Cardiac septum (tissue), 1 donor: ENCODE measurements at regions of chr12 and their contacts with region 1.

Region 1: DNA sequence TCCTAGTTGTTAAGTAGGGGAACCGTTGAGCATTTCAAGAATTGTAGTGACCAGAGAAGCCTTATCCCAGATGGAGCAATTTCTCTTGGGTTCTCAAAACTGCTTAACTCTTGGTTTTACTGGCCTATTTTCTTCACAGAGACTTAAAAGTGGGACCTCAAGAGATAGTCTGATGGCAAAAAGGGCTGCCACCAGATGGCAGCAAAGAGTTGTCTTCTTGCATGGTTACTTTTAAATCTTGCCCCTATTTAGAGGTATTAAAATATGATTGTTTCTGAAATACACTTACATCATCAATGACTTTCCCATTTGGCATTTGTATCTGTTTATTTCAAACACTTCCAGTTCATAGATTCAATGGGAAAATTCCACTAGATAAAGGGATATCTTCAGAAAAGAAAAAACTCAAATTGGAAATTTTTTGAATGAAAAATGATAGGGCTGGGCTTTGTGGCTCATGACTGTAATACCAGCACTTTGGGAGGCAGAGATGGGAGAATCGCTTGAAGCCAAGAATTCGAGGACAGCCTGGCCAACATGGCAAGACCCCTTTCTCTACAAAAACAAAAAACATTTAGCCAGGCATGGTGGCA is 69.9 kb upstream of the CNTN1 start:
- DNase-seq: no peak

Region 2: DNA sequence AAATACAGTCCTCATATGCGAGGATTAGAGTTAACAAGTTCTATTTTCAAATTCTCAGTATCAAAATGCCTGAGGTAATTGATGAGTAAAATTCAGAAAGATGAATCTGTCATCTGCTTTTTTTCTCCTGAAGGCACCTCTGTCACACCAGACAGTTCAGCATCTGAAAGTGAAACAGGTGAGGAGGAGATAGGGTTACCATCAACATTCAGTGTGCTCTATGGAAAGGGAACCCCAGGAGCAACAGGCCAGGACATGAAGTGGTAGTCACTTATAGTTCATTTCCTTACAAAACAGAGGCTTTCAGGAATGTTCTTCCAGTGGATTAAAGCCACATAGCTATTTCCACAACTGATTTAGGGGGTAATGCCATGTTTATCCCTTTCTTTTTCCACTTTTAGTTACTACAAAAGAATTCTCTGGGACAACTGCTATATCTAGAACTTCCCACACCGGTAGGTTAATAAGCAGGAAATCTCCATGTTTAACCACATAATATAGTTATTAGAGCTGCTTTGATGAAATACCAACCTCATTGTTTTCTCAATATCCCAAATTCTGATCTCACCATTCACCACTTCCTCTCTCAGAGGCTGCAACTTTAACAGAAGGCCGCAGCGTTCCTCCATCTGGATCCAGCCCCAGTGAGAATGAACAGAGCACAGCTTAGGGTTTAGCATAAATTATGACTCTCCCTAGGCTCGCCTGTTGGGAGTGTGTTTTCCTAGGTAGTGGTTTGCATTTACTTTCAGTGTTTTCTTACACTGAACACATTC is 107.1 kb before region 1 on chr12:
- intact Hi-C with region 1: no loop called
- DNase-seq: no peak

Region 3: DNA sequence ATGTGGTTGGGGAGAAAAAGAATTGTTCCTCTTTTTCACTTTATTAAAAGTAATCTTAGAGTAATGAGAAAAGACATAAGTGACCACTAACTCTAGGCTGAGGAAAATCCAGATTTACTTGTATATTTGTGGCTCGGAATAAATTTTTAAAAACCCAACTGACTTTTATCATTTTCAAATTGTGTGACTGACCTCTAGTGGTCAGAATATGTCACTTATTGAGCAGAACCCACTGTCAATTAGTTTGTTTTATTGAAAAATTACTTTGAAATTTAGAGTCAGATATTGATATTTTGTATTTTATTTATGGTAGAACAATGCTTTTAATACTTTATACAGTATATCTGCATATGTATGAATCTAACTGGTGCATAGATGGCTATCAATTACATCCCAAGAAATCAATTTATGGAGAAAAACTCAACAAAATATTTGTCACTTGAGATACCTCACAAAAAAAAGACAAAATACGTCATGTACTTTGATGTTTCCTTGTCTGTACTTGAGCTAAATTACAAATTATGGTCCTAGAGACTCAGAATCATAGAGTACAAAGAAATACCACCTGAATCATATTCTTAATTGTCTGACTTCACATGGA is 299.3 kb after region 1 on chr12:
- intact Hi-C with region 1: loop called (anchors 5 kb)
- DNase-seq: no peak